ENCODE measurements at regions of chr2 and their contacts with region 1.

Region 1: GRCh38 chr2:11562011-11562410 is 28.2 kb downstream of the GREB1 start:
- DNase-seq: no peak
- ATAC-seq: no peak
- H3K4me3 ChIP-seq: no peak overlapping the region
- H3K4me3 Mint-ChIP-seq: no peak overlapping the region
- H3K27ac ChIP-seq: no peak overlapping the region
- H3K27ac Mint-ChIP-seq: no peak overlapping the region
- H3K4me1 ChIP-seq: no peaks in the 10 kb centered on the region
- H3K4me1 Mint-ChIP-seq: no peaks in the 10 kb centered on the region
- H3K27me3 ChIP-seq: no peaks in the 10 kb centered on the region
- H3K27me3 Mint-ChIP-seq: peaks cover 13% of the 10 kb centered on the region
- CTCF ChIP-seq: no peak

Region 2: DNA sequence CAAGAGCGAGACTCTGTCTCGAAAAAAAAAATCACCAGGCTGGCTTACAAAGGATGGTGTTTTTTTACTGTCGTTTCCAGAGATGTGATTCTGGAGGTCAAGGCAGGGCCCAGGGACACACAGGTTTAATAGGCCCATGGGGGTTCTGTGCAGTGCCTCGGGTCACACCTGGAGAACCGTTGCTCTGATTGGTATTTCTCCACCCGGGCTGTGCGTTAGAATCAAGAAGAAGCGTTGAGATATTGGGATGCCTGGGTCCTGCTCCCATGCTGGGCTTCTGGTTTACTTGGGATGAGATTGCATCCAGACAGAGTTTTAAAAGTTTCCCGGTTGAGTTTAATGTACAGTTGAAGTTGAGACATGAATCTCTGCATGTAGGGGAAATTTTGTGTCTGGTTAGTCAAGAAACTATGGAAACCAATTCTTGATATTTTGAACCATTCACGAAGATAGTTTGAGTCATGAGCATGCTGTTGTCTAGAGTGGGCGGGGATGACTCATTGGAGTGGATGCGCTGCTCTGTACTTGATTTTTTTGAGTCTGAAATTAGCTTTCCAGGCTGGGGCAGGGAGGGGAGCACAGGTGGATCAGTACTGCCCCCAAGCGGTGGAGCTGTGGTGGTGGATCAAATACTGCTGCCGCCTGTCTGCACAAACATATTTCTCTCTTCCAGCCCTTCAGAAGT is 22.0 kb after region 1 on chr2:
- CTCF ChIA-PET with region 1: interaction called, 13 read pairs
- POLR2A ChIA-PET with region 1: no interaction called
- intact Hi-C with region 1: no loop called
- DNase-seq: peak; percentile 16 to 65 (median 53)
- ATAC-seq: peak; percentile 94
- H3K4me3 ChIP-seq: no peak overlapping the region
- H3K4me3 Mint-ChIP-seq: no peak overlapping the region
- H3K27ac ChIP-seq: no peak overlapping the region
- H3K27ac Mint-ChIP-seq: no peak overlapping the region
- H3K4me1 ChIP-seq: no peaks in the 10 kb centered on the region
- H3K4me1 Mint-ChIP-seq: peaks cover 3% of the 10 kb centered on the region
- H3K27me3 ChIP-seq: no peaks in the 10 kb centered on the region
- H3K27me3 Mint-ChIP-seq: peaks cover 11% of the 10 kb centered on the region
- CTCF ChIP-seq: peak; percentile 53

Measured in CD8-positive, alpha-beta T cell (primary cell).